GM12878 (cell line): ENCODE measurements at regions of chr18 and their contacts with region 1.

Region 1: DNA sequence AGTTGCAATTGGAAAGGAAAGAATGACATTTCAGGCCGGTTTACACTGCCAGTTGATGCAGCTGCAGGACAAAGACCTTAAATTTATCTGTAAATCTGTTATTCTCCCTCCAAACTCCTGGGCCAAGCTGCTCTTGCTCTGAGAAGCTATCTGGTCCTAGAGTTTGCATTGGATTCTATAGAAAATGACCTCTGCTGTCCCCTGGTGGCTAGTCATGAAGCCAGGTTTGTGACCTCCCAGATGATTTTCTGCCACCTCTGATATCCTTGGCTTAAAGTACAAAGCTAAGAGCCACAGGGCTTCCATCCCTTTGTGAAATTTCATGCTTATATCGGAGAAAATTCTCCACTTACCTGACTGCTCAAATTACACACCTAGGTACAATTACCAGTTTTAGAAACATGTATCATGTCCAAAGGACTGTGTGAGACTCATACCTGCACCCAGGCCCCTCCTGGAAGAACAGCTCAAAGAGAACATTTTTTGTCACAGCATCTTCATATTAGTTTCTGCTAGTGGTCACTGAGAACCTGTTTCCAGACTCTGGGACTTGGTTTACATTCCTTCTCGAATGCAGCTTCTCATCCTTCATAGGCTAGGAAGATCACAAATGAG is 28.9 kb upstream of the IER3IP1 start:
- DNase-seq: no peak
- ATAC-seq: peak; percentile 82
- H3K4me3 ChIP-seq: no peak overlapping the region
- H3K27ac ChIP-seq: no peak overlapping the region
- H3K4me1 ChIP-seq: no peaks in the 10 kb centered on the region
- H3K27me3 ChIP-seq: peaks cover 0 to 1% of the 10 kb centered on the region in 2 experiments; a peak in 3 of 4 replicates
- CTCF ChIP-seq: peak; percentile 86 to 90 (median 89)
- EP300 ChIP-seq: no peak
- POLR2A ChIP-seq: no peak
- RAD21 ChIP-seq: peak; percentile 88

Region 2: GRCh38 chr18:47050468-47050867 is 154.5 kb before region 1 on chr18:
- CTCF ChIA-PET with region 1: interaction called, 56 read pairs
- POLR2A ChIA-PET with region 1: no interaction called
- RAD21 ChIA-PET with region 1: interaction called, 15 read pairs
- SMC1A ChIA-PET with region 1: interaction called, 9 read pairs
- in situ Hi-C with region 1: no loop called
- intact Hi-C with region 1: loop called (anchors 1 kb)
- DNase-seq: no peak
- ATAC-seq: peak; percentile 71
- H3K4me3 ChIP-seq: no peak overlapping the region
- H3K27ac ChIP-seq: no peak overlapping the region
- H3K4me1 ChIP-seq: no peaks in the 10 kb centered on the region
- H3K27me3 ChIP-seq: no peaks in the 10 kb centered on the region
- CTCF ChIP-seq: peak; percentile 68 to 76 (median 70)
- EP300 ChIP-seq: no peak
- POLR2A ChIP-seq: no peak
- RAD21 ChIP-seq: peak; percentile 71

Region 3: DNA sequence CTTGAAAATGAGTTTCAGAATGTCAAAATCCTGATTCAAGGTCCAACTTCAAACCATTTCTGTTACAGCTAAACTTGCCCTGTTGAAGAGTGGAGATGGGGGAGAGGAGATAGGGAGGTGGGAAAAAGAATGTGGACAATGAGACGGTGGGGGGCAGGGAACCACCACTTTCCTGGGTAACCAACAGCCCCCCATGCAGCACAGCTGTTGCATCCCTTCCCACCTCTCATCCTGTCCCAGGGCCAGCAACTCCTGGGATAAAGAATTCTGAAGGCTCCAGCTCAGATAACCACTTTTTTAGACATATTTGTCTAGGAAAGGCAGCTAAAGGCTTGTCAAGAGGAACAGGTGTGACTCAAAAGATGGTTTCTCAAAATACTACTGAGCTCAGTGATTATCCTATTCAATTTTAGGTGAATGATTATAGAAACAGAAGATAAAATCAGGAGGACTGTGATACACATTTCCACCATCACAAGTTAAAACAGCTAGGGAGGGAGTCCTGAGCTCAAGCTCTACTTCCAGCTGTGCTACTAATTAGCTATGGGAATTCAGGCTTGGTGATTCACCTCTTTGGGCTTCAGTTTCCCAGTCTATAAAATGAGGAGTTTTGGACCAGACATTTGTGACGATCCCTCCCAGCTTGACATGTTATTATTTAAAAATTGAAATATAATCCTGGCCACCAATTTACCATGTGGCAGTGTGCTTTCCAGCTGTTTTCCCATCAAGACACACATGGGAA is 91.0 kb before region 1 on chr18:
- CTCF ChIA-PET with region 1: interaction called, 23 read pairs
- POLR2A ChIA-PET with region 1: no interaction called
- RAD21 ChIA-PET with region 1: interaction called, 6 read pairs
- SMC1A ChIA-PET with region 1: interaction called, 3 read pairs
- in situ Hi-C with region 1: no loop called
- intact Hi-C with region 1: no loop called
- DNase-seq: no peak
- ATAC-seq: no peak
- H3K4me3 ChIP-seq: no peak overlapping the region
- H3K27ac ChIP-seq: no peak overlapping the region
- H3K4me1 ChIP-seq: no peaks in the 10 kb centered on the region
- H3K27me3 ChIP-seq: no peaks in the 10 kb centered on the region
- CTCF ChIP-seq: no peak
- EP300 ChIP-seq: no peak
- POLR2A ChIP-seq: no peak
- RAD21 ChIP-seq: no peak

Region 4: DNA sequence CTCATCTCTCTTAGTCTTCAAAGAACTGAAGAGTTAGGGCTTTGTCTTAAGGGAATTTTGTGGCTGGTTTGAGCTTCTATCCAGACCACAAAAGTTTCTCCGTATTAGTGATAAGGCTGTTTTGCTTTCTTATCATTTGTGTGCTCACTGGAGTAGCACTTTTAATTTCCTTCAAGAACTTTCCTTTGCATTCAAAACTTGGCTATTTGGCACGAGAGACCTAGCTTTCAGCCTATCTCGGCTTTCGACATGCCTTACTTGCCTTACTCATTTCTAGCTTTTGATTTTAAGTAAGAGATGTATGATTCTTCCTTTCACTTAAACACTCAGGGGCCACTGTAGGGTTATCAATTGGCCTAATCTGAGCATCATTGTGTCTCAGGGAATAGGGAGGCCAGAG is 84.6 kb before region 1 on chr18:
- CTCF ChIA-PET with region 1: interaction called, 10 read pairs
- POLR2A ChIA-PET with region 1: no interaction called
- RAD21 ChIA-PET with region 1: interaction called, 3 read pairs
- SMC1A ChIA-PET with region 1: interaction called, 4 read pairs
- in situ Hi-C with region 1: no loop called
- intact Hi-C with region 1: no loop called
- DNase-seq: peak; percentile 47
- ATAC-seq: peak; percentile 95
- H3K4me3 ChIP-seq: no peak overlapping the region
- H3K27ac ChIP-seq: no peak overlapping the region
- H3K4me1 ChIP-seq: peaks cover 11% of the 10 kb centered on the region
- H3K27me3 ChIP-seq: no peaks in the 10 kb centered on the region
- CTCF ChIP-seq: no peak
- EP300 ChIP-seq: peak in 1 of 2 experiments; percentile 19; a peak in 1 of 4 replicates
- POLR2A ChIP-seq: no peak
- RAD21 ChIP-seq: no peak